Sigmoid colon (tissue), 7 donors: ENCODE measurements at regions of chr13 and their contacts with region 1.

Region 1: GRCh38 chr13:35164324-35164932 is 222.4 kb downstream of the NBEA start:
- DNase-seq: no peak
- H3K4me3 ChIP-seq: no peak overlapping the region
- H3K27ac ChIP-seq: no peak overlapping the region
- H3K4me1 ChIP-seq: peaks cover 0 to 11% (median 4%) of the 10 kb centered on the region in 4 donors
- H3K27me3 ChIP-seq: no peaks in the 10 kb centered on the region
- CTCF ChIP-seq: peak; percentile 53 to 71 (median 64)
- EP300 ChIP-seq: no peak
- POLR2A ChIP-seq: no peak

Region 2: DNA sequence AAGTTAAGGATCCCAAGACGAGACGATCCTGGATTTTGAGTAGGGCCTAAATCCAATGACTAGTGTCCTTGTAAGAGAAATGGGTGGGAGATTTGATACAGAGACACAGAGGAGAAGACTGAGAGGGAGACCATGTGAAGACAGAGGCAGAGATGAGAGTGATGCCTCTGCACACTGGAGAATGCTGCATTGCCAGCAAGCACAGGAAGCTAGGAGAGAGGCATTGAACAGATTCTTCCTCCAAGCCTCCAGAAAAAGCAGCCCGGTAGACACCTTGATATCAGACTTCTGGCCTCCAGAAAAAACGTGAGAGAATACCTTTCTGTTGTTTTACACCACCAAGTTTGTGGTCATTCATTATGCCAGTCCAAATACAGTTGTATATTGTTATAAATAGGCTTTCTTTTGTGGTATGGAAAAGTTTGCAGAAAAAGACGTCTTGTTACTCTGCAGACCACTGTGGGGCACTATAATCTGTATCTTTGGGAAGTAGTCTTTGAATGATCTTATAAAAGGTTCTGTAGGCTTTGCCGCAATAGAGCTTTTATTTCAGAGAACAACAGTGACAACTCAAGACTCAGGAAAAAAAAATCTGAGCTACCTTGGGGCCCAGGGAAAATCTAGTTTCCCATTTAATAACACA is 1364.4 kb before region 1 on chr13:
- intact Hi-C with region 1: loop called (anchors 5 kb)
- DNase-seq: no peak
- H3K4me3 ChIP-seq: peak overlapping the region in 1 of 4 donors; percentile 7
- H3K27ac ChIP-seq: peak overlapping the region in 3 of 4 donors; percentile 3 to 55 (median 29)
- H3K4me1 ChIP-seq: peaks cover 0 to 28% (median 18%) of the 10 kb centered on the region in 4 donors
- H3K27me3 ChIP-seq: no peaks in the 10 kb centered on the region
- CTCF ChIP-seq: peak in 2 of 4 experiments; percentile 17 to 50
- EP300 ChIP-seq: no peak
- POLR2A ChIP-seq: no peak

Region 3: GRCh38 chr13:34076943-34077703 is 1087.3 kb before region 1 on chr13:
- intact Hi-C with region 1: loop called (anchors 10 kb)
- DNase-seq: no peak
- H3K4me3 ChIP-seq: no peak overlapping the region
- H3K27ac ChIP-seq: no peak overlapping the region
- H3K4me1 ChIP-seq: peaks cover 0 to 12% (median 10%) of the 10 kb centered on the region in 4 donors
- H3K27me3 ChIP-seq: no peaks in the 10 kb centered on the region
- CTCF ChIP-seq: peak; percentile 24 to 61 (median 48)
- EP300 ChIP-seq: no peak
- POLR2A ChIP-seq: no peak